Heart left ventricle (tissue), 16 donors: ENCODE measurements at regions of chr5 and their contacts with region 1.

Region 1: GRCh38 chr5:111158105-111158744 is 66.0 kb upstream of the CAMK4 start:
- DNase-seq: peak in 4 of 5 donors; percentile 39 to 58 (median 46)
- ATAC-seq: peak in 3 of 4 donors; percentile 54 to 64 (median 63)
- H3K4me3 ChIP-seq: no peak overlapping the region
- H3K27ac ChIP-seq: no peak overlapping the region
- H3K4me1 ChIP-seq: peaks cover 0 to 3% (median 0%) of the 10 kb centered on the region in 12 donors
- H3K27me3 ChIP-seq: no peaks in the 10 kb centered on the region
- CTCF ChIP-seq: peak; percentile 98 to 100 (median 100)
- POLR2A ChIP-seq: no peak

Region 2: GRCh38 chr5:111278845-111279504 is 120.8 kb after region 1 on chr5:
- intact Hi-C with region 1: loop called (anchors 2 to 5 kb)
- DNase-seq: peak; percentile 11 to 74 (median 37)
- ATAC-seq: peak in 1 of 4 donors; percentile 68
- H3K4me3 ChIP-seq: no peak overlapping the region
- H3K27ac ChIP-seq: no peak overlapping the region
- H3K4me1 ChIP-seq: no peaks in the 10 kb centered on the region
- H3K27me3 ChIP-seq: no peaks in the 10 kb centered on the region
- CTCF ChIP-seq: peak; percentile 48 to 80 (median 69)
- POLR2A ChIP-seq: no peak

Region 3: GRCh38 chr5:111512375-111513130 is 354.3 kb after region 1 on chr5 and contains the start of gene STARD4:
- intact Hi-C with region 1: loop called in 1 of 10 experiments (anchors 10 kb)
- DNase-seq: peak; percentile 95 to 97 (median 96)
- ATAC-seq: peak; percentile 99
- H3K4me3 ChIP-seq: peak within 1 kb of the TSS; percentile 68 to 95 (median 84)
- H3K27ac ChIP-seq: peak within 1 kb of the TSS in 11 of 12 donors; percentile 74 to 93 (median 84)
- H3K4me1 ChIP-seq: peaks cover 0 to 37% (median 14%) of the 10 kb centered on the region in 12 donors
- H3K27me3 ChIP-seq: no peaks in the 10 kb centered on the region
- CTCF ChIP-seq: no peak
- POLR2A ChIP-seq: peak in 1 of 2 donors; percentile 75
- total RNA-seq, gene STARD4: 7.6 to 14.5 (median 9.4) TPM

Region 4: DNA sequence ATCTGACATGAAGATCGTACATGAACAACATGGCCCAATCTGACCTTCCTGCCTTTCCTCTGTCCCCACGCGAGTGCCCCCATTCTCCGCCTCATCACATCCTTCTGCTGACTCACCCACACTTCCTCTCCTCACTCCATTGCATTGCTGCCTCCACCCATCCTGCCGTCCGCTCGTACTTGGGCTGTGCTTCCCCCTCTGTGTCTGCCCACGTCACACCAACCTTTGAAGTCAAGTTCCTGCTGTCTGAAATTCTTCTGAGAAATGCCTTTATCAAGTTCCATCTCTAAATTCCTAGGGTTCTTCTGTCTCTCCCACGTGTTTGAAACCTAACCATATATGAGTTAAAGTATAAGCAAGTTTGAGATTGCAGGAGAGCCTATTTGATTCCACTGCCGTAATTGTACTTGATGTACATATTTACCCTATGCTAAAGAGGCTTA is 372.1 kb after region 1 on chr5:
- intact Hi-C with region 1: loop called in 2 of 10 experiments (anchors 10 kb)
- DNase-seq: peak; percentile 80 to 88 (median 81)
- ATAC-seq: peak; percentile 91 to 100 (median 98)
- H3K4me3 ChIP-seq: no peak overlapping the region
- H3K27ac ChIP-seq: peak overlapping the region in 11 of 12 donors; percentile 22 to 82 (median 57)
- H3K4me1 ChIP-seq: peaks cover 0 to 51% (median 0%) of the 10 kb centered on the region in 12 donors
- H3K27me3 ChIP-seq: no peaks in the 10 kb centered on the region
- CTCF ChIP-seq: no peak
- POLR2A ChIP-seq: no peak

Region 5: GRCh38 chr5:112154940-112155686 is 996.9 kb after region 1 on chr5:
- intact Hi-C with region 1: loop called in 1 of 10 experiments (anchors 5 kb)
- DNase-seq: no peak
- ATAC-seq: no peak
- H3K4me3 ChIP-seq: no peak overlapping the region
- H3K27ac ChIP-seq: no peak overlapping the region
- H3K4me1 ChIP-seq: peaks cover 0 to 3% (median under 1%) of the 10 kb centered on the region in 12 donors
- H3K27me3 ChIP-seq: no peaks in the 10 kb centered on the region
- CTCF ChIP-seq: no peak
- POLR2A ChIP-seq: no peak